ENCODE measurements at regions of chr4 and their contacts with region 1.

Region 1: GRCh38 chr4:155442267-155443105 is 65.7 kb upstream of the MAP9 start:
- DNase-seq: peak; percentile 80
- ATAC-seq: peak; percentile 93 to 95

Region 2: GRCh38 chr4:155667568-155668511 is 225.4 kb after region 1 on chr4:
- intact Hi-C with region 1: loop called in 1 of 2 experiments (anchors 10 kb)
- DNase-seq: peak; percentile 58
- ATAC-seq: peak; percentile 88 to 89

Region 3: DNA sequence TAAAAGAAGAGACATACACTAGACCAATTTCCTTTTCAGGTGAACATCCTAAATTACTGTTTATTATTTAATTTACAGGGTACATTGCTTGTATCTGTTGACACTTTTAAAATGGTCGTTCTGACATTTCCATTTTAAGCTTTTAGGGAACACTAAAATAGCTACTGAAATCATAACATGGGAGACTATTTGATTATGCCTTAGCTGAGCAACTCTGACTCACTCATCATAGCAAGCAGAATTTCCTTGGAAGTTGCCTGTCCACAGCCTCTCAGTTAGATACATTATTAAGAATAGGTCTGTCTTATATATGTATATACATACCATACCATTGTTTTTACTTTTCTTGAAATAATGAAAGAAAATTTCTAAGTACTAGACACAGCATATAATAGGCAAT is 338.3 kb after region 1 on chr4:
- intact Hi-C with region 1: loop called in 1 of 2 experiments (anchors 5 kb)
- DNase-seq: no peak
- ATAC-seq: no peak

Region 4: GRCh38 chr4:155787113-155787710 is 344.7 kb after region 1 on chr4:
- intact Hi-C with region 1: loop called (anchors 2 to 5 kb)
- DNase-seq: no peak
- ATAC-seq: peak; percentile 90 to 91

Region 5: GRCh38 chr4:155953151-155954114 is 510.9 kb after region 1 on chr4 and contains the start of gene CTSO:
- intact Hi-C with region 1: loop called in 1 of 2 experiments (anchors 2 kb)
- DNase-seq: peak; percentile 83
- ATAC-seq: peak; percentile 97 to 98
- total RNA-seq, gene CTSO: 10.0 to 10.2 TPM